Cardiac septum (tissue), 1 donor: ENCODE measurements at regions of chr19 and their contacts with region 1.

Region 1: GRCh38 chr19:19531951-19532805 is 3.5 kb downstream of the YJEFN3 start:
- DNase-seq: peak; percentile 94

Region 2: GRCh38 chr19:19554074-19555023 is 22.2 kb after region 1 on chr19:
- intact Hi-C with region 1: loop called (anchors 2 kb)
- DNase-seq: peak; percentile 85

Region 3: GRCh38 chr19:19643158-19644053 is 111.2 kb after region 1 on chr19 and contains the start of gene GMIP:
- intact Hi-C with region 1: loop called (anchors 2 kb)
- DNase-seq: peak; percentile 93
- total RNA-seq, gene GMIP: 3.5 TPM